Motor neuron (in vitro differentiated cells): ENCODE measurements at regions of chr4 and their contacts with region 1.

Region 1: DNA sequence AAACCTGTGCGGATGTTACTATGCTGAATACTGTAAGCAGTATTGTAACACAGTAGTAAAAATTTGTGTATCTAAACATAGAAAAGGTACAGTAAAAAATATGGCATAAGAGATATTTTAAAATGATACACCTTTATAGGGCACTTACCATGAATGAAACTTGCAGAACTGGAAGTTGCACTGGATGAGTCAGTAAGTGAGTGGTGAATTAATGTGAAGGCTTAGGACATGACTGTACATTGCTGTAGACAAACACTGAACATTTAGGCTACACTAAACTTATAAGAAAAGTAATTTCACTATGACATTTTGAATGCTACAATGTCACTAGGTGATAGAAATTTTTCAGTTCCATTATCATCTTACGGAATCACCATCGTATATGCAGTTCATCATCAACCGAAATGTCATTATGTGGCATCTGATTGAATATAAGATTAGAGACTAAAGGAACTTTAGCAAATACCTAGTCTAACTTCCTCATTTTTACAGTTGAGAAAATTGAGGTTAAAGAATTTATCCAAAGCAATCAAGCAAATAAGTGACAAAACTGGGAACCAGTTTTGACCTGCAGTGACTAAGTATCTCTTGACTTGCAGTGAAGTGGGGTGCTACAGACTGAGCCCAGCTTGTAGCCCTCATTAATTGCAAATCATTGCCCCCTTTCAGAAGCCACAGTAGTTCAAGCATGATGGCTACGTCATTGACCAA is 55.3 kb downstream of the EGF start:
- ATAC-seq: no peak
- H3K4me3 ChIP-seq: no peak overlapping the region
- H3K27ac ChIP-seq: no peak overlapping the region
- H3K4me1 ChIP-seq: no peaks in the 10 kb centered on the region

Region 2: GRCh38 chr4:109406338-109406931 is 561.5 kb before region 1 on chr4:
- in situ Hi-C with region 1: loop called in 1 of 9 experiments (anchors 25 kb)
- ATAC-seq: peak; percentile 47 to 89 (median 60)
- H3K4me3 ChIP-seq: no peak overlapping the region
- H3K27ac ChIP-seq: no peak overlapping the region
- H3K4me1 ChIP-seq: peaks cover 0 to 5% of the 10 kb centered on the region in 2 donors

Region 3: DNA sequence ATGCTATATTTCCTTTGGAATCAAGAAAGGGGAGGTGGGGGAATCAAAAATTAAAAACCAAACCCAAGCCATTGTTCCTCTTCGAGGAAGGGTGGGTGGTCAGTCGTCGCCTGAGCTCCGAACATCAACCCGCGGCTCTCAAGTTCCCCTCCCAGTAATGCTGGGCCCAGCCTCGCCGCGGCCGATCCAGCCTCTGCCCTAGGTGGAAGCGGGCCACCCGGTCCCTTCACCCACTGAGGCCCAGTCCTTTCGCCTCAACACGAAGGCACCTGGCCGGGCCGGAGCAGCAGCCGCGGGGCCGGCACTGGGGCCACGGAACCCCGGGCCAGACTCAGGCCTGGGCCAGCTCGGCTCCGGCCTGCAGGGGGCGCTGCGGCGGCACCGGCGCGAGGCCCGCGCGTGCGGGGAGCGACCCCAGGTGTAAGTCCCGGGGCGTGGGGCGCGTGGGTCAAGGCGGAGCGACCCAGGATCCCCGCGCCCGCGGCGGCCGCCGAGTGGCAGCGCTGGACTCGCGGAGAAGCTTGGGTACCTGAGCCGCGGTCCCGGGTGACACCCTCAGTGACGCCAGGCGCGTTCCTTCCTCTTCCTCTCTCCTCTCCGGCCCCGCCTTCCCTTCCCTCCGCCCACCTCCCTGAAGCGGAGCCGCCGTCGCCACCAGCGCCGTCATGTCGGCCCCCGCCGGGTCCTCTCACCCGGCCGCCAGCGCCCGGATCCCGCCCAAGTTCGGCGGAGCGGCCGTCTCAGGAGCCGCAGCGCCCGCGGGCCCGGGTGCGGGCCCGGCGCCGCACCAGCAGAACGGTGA is 534.5 kb before region 1 on chr4 and contains the start of gene SEC24B:
- in situ Hi-C with region 1: loop called in 3 of 9 experiments (anchors 25 kb)
- ATAC-seq: peak; percentile 84 to 93 (median 90)
- H3K4me3 ChIP-seq: peak within 1 kb of the TSS; percentile 87 to 99 (median 98)
- H3K27ac ChIP-seq: peak within 1 kb of the TSS; percentile 86 to 95
- H3K4me1 ChIP-seq: peaks cover 11 to 21% of the 10 kb centered on the region in 2 donors
- total RNA-seq, gene SEC24B: 15.9 to 28.5 (median 22.4) TPM

Region 4: GRCh38 chr4:109588176-109588575 is 379.8 kb before region 1 on chr4:
- in situ Hi-C with region 1: no loop called
- ATAC-seq: no peak
- H3K4me3 ChIP-seq: no peak overlapping the region
- H3K27ac ChIP-seq: no peak overlapping the region
- H3K4me1 ChIP-seq: no peaks in the 10 kb centered on the region

Region 5: DNA sequence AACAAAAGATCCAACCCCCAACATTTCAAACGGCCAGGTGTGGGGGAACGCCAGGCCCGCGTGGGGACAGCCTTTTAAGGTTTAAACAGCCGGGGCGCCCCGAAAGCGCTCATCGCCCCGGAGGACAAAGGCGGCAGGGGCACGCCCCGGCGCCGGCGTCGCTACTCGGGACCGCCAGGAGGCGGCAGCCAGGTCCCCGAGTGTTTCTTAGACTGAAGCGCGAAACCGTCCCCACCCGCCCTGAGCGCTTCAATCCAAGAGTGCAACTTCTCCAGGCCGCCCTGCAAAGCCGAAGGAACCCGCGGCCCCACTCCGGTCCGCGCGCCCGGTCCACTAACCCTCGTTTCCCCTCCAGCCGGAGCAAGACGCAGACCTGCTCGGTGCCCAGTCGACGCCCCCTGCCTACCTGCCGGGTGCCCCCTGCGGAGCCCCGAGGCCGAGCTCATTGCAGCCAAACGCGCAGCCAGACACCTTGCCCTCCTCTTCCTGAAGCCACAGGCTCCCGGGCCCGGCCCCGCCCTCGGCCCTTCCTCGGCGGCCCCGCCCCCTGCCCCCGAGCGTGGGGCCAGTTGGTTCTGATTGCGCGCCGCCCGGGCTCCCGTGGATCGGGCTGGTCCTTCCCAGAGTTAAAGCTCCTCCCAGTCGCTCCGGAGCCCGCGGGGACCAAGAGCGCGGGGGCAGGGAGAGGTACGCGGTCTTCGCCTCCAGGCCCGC is 264.8 kb before region 1 on chr4 and contains the start of gene CASP6:
- in situ Hi-C with region 1: loop called in 1 of 9 experiments (anchors 25 kb)
- ATAC-seq: peak; percentile 85 to 91 (median 89)
- H3K4me3 ChIP-seq: peak within 1 kb of the TSS; percentile 60 to 81 (median 71)
- H3K27ac ChIP-seq: peak within 1 kb of the TSS; percentile 5 to 64
- H3K4me1 ChIP-seq: peaks cover 7 to 13% of the 10 kb centered on the region in 2 donors
- total RNA-seq, gene CASP6: 6.1 to 15.4 (median 8.2) TPM

Region 6: GRCh38 chr4:109826719-109827118 is 141.2 kb before region 1 on chr4:
- in situ Hi-C with region 1: loop called in 1 of 9 experiments (anchors 25 kb)
- ATAC-seq: peak in 3 of 8 experiments; percentile 20 to 48 (median 47)
- H3K4me3 ChIP-seq: no peak overlapping the region
- H3K27ac ChIP-seq: no peak overlapping the region
- H3K4me1 ChIP-seq: no peaks in the 10 kb centered on the region